Activated CD4-positive, alpha-beta T cell treated with anti-CD3 and anti-CD28 coated beads for 36 hours (primary cell): ENCODE measurements at regions of chr10 and their contacts with region 1.

Region 1: DNA sequence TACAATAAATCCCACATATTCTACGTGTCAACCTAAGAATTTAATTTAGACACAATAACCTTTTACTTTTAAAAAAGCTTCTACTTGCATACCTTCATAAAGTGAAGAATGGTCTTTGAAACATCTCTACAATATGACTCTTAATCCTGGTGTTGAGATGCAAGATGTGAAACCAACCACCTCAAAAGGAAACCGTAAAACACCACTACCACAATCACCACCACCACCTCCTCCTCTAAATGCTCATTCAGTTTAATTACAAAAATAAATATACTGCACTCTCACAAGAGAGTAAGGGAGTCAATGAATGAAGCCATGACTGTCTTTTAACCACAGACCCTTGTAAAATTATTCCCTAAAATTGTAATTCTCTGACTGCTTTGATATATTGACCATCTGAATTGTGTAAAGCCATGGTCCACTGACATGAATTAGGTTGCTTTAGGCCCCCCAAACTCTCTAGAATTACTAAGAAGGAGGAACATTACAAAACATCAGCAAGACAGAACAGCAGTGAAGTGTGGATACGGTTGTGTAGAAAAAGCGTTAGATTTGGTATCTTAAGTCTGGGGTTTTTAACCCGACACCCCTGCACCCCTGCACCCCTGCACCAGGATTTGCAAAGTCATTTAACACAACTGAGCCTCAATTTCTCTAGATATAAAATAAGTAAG is 171.4 kb downstream of the SFMBT2 start:
- DNase-seq: peak; percentile 60
- ATAC-seq: peak; percentile 92
- H3K4me3 Mint-ChIP-seq: no peak overlapping the region
- H3K27ac Mint-ChIP-seq: peak overlapping the region; percentile 26
- H3K4me1 Mint-ChIP-seq: peaks cover 34% of the 10 kb centered on the region
- H3K27me3 Mint-ChIP-seq: peaks cover 3% of the 10 kb centered on the region

Region 2: GRCh38 chr10:7184660-7185366 is 54.6 kb before region 1 on chr10:
- CTCF ChIA-PET with region 1: no interaction called
- POLR2A ChIA-PET with region 1: interaction called, 6 read pairs
- intact Hi-C with region 1: loop called in 1 of 2 experiments (anchors 5 kb)
- DNase-seq: no peak
- ATAC-seq: peak; percentile 6
- H3K4me3 Mint-ChIP-seq: peak overlapping the region; percentile 2
- H3K27ac Mint-ChIP-seq: peak overlapping the region; percentile 89
- H3K4me1 Mint-ChIP-seq: peaks cover 69% of the 10 kb centered on the region
- H3K27me3 Mint-ChIP-seq: no peaks in the 10 kb centered on the region

Region 3: DNA sequence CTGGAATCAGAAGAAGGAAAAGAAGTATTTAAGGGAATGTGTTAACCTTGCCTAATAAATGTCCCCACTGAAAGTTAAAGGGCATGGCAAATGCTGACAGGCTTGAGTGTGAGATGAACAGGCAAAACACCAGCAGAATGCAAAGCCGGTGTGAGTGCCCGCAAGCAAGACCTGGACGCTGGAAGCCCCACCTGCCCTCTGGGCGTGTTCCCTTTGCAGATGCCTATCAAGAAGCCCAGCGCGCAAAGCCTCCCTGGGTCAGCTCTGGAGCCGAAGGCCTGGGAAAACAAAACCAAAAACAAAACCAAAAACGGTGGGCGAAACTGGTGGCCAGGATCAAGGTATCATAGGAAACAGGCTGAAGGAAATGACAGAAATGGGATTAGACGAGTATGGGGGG is 28.9 kb before region 1 on chr10:
- CTCF ChIA-PET with region 1: no interaction called
- POLR2A ChIA-PET with region 1: no interaction called
- intact Hi-C with region 1: no loop called
- DNase-seq: no peak
- ATAC-seq: no peak
- H3K4me3 Mint-ChIP-seq: no peak overlapping the region
- H3K27ac Mint-ChIP-seq: no peak overlapping the region
- H3K4me1 Mint-ChIP-seq: peaks cover 7% of the 10 kb centered on the region
- H3K27me3 Mint-ChIP-seq: no peaks in the 10 kb centered on the region

Region 4: DNA sequence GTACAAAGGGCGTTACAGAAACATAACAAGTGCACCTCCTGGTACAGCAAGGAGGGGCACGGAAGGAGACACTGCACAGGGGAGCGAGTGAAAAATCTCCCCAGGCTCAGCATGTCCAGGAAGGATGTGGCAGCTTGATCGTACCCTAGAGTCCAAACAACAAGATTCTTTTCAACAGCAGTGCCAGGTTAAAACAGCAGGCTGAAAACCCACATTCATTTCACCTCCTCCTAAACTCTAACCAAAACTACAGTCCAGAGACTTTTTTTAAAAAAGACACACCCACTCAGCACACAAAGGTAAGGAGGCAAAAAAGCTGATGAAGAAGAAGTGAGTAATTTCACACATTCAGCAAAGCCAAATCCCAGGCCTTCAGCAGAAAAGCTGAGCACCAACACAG is 32.6 kb after region 1 on chr10:
- CTCF ChIA-PET with region 1: interaction called, 4 read pairs
- POLR2A ChIA-PET with region 1: no interaction called
- intact Hi-C with region 1: loop called in 1 of 2 experiments (anchors 1 kb)
- DNase-seq: peak; percentile 23
- ATAC-seq: peak; percentile 37
- H3K4me3 Mint-ChIP-seq: peak overlapping the region; percentile 24
- H3K27ac Mint-ChIP-seq: peak overlapping the region; percentile 84
- H3K4me1 Mint-ChIP-seq: peaks cover 81% of the 10 kb centered on the region
- H3K27me3 Mint-ChIP-seq: no peaks in the 10 kb centered on the region

Region 5: GRCh38 chr10:7857262-7857661 is 617.8 kb after region 1 on chr10:
- CTCF ChIA-PET with region 1: no interaction called
- POLR2A ChIA-PET with region 1: no interaction called
- intact Hi-C with region 1: no loop called
- DNase-seq: no peak
- ATAC-seq: no peak
- H3K4me3 Mint-ChIP-seq: no peak overlapping the region
- H3K27ac Mint-ChIP-seq: no peak overlapping the region
- H3K4me1 Mint-ChIP-seq: peaks cover 11% of the 10 kb centered on the region
- H3K27me3 Mint-ChIP-seq: no peaks in the 10 kb centered on the region